PC-9 (cell line): ENCODE measurements at regions of chr11 and their contacts with region 1.

Region 1: GRCh38 chr11:134145715-134146114 is 76.8 kb downstream of the JAM3 start:
- DNase-seq: no peak
- H3K4me3 ChIP-seq: no peak overlapping the region
- H3K27ac ChIP-seq: no peak overlapping the region
- H3K4me1 ChIP-seq: no peaks in the 10 kb centered on the region
- H3K27me3 ChIP-seq: peaks cover 28% of the 10 kb centered on the region
- CTCF ChIP-seq: no peak

Region 2: GRCh38 chr11:133927690-133928627 is 217.8 kb before region 1 on chr11:
- CTCF ChIA-PET with region 1: no interaction called
- POLR2A ChIA-PET with region 1: no interaction called
- intact Hi-C with region 1: loop called (anchors 5 kb)
- DNase-seq: peak in 1 of 2 experiments; percentile 37
- H3K4me3 ChIP-seq: no peak overlapping the region
- H3K27ac ChIP-seq: no peak overlapping the region
- H3K4me1 ChIP-seq: no peaks in the 10 kb centered on the region
- H3K27me3 ChIP-seq: peaks cover 91% of the 10 kb centered on the region
- CTCF ChIP-seq: peak; percentile 78

Region 3: DNA sequence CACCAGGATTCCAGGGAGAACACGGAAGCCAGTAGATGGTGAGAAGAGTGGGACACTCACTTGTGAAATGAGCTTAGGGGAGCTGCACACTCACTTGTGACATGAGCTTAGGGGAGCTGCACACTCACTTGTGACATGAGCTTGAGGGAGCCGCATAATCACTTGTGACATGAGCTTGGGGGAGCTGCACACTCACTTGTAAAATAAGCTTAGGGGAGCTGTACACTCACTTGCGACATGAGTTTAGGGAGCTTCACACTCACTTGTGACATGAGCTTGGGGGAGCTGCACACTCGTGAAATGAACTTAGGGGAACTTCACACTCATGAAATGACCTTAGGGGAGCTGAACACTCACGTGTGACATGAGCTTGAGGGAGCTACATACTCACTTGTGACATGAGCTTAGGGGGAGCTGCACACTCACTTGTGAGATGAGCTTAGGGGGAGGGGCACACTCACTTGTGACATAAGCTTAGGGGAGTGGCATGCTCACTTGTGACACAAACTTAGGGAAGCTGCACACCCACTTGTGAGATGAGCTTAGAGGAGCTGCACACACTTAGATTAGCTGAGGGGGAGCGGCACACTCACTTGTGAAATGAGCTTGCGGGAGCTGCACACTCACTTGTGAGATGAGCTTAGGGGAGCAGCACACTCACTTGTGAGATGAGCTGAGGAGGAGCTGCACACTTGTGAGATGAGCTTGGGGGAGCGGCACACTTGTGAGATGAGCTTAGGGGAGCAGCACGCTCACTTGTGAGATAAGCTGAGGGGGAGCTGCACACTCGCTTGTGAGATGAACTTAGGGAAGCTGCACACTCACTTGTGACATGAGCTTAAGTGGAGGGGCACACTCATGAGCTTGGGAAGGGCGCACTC is 19.0 kb after region 1 on chr11:
- CTCF ChIA-PET with region 1: no interaction called
- POLR2A ChIA-PET with region 1: no interaction called
- intact Hi-C with region 1: no loop called
- DNase-seq: no peak
- H3K4me3 ChIP-seq: no peak overlapping the region
- H3K27ac ChIP-seq: no peak overlapping the region
- H3K4me1 ChIP-seq: no peaks in the 10 kb centered on the region
- H3K27me3 ChIP-seq: no peaks in the 10 kb centered on the region
- CTCF ChIP-seq: no peak

Region 4: GRCh38 chr11:134331354-134332188 is 185.9 kb after region 1 on chr11 and contains the start of gene GLB1L2:
- CTCF ChIA-PET with region 1: no interaction called
- POLR2A ChIA-PET with region 1: no interaction called
- intact Hi-C with region 1: no loop called
- DNase-seq: peak; percentile 41 to 73
- H3K4me3 ChIP-seq: peak within 1 kb of the TSS; percentile 99
- H3K27ac ChIP-seq: no peak within 1 kb of the TSS
- H3K4me1 ChIP-seq: peaks cover 32% of the 10 kb centered on the region
- H3K27me3 ChIP-seq: 0 out of 2 replicates have a peak, but pooled peaks cover 6% of the 10 kb centered on the region
- CTCF ChIP-seq: no peak
- total RNA-seq, gene GLB1L2: 28.8 and 32.2 TPM in 2 replicates